ENCODE measurements at regions of chr2 and their contacts with region 1.

Region 1: DNA sequence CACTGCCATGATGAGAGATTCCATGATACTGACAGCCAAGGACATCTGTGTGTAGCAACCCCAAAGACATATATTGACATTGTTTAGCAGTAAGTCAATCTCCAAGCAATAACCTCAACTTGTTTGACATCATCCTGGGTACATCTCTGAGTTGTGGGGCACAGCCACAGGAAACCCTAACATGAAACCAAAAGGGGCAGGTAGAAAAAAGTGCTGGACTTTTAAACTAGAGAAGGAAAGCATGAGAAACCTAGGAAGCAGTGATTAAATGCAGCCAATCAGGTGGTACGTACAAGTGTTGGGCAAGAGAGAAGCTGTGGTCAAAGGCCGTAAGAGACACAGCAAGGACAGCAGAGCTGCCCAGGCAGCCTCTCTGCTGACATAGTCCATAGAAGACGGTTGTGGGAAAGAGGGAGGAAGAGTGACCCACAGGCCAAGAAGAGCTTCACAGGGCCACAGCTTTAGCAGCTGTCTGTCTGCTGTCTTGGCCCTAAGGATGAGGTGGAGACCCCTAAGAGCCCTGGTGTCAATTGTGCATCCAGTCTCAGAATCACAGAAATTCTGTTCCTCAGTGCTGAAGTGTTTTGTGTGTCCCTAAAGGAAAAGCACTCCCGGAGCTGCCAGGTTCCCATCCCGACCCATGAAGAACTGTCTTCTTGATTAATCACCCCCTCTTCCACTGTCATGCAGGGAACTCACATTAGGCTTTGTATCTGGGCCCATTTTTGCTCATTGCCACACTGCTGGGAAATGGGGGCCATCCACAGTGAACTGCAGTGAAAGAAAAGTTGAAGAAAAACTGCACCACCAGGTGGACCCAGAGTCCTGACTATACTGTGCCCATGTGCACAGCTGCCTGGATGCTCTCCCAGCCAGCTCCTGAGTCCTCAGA is 25.4 kb upstream of the CHN1 start:
- DNase-seq: peak; percentile 27 to 63
- H3K4me3 ChIP-seq: no peak overlapping the region
- H3K4me1 ChIP-seq: peaks cover 8% of the 10 kb centered on the region
- H3K27me3 ChIP-seq: no peaks in the 10 kb centered on the region

Region 2: GRCh38 chr2:175282290-175282689 is 251.7 kb after region 1 on chr2:
- in situ Hi-C with region 1: loop called (anchors 25 kb)
- DNase-seq: peak in 1 of 2 experiments; percentile 75
- H3K4me3 ChIP-seq: no peak overlapping the region
- H3K4me1 ChIP-seq: no peaks in the 10 kb centered on the region
- H3K27me3 ChIP-seq: peaks cover 16% of the 10 kb centered on the region

Measured in HAP-1 (cell line).